Activated naive CD4-positive, alpha-beta T cell treated with anti-CD3 and anti-CD28 coated beads for 36 hours (primary cell): ENCODE measurements at regions of chr3 and their contacts with region 1.

Region 1: GRCh38 chr3:194671900-194672808 is at the start of gene LSG1:
- DNase-seq: peak; percentile 94
- H3K4me3 Mint-ChIP-seq: peak within 1 kb of the TSS; percentile 99
- H3K27ac Mint-ChIP-seq: peak within 1 kb of the TSS; percentile 97
- H3K4me1 Mint-ChIP-seq: peaks cover 55% of the 10 kb centered on the region
- H3K27me3 Mint-ChIP-seq: no peaks in the 10 kb centered on the region
- total RNA-seq, gene LSG1: 26.4 to 27.0 TPM

Region 2: DNA sequence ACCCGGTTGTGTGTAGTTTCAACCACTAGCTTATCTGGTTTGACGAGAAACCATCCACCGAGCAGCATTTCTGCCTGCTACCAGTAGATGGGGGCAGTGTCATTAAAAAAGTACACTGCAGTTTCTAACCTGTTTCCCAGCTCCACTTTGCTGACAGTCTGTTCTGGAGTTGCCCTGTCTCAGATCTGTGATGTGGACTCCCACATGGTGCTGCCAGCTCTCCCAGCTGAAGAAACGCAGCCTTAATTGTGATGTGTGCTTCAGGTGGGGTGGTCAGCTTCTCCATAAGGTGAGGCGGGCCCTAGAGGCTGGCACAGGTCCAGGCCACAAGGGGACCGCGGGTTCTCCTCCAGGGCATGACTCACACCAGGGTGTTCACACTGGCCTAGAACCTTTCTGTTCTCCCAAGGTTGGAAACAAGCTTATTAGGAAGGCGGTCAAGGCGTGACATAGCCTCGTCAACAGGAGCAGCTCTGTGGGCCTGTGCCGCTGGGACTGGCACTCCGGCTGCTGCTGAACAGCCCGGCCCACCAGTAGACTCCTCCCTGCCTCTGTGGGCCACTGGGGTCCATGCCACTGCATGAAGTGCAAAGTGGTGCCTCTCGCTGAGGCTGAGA is 10.6 kb after region 1 on chr3:
- CTCF ChIA-PET with region 1: interaction called, 110 read pairs
- intact Hi-C with region 1: loop called (anchors 1 kb)
- DNase-seq: peak; percentile 74
- H3K4me3 Mint-ChIP-seq: no peak overlapping the region
- H3K27ac Mint-ChIP-seq: no peak overlapping the region
- H3K4me1 Mint-ChIP-seq: peaks cover 29% of the 10 kb centered on the region
- H3K27me3 Mint-ChIP-seq: peaks cover 13% of the 10 kb centered on the region

Region 3: GRCh38 chr3:195106418-195106906 is 434.3 kb after region 1 on chr3:
- CTCF ChIA-PET with region 1: interaction called, 6 read pairs
- intact Hi-C with region 1: loop called (anchors 1 kb)
- DNase-seq: peak; percentile 63
- H3K4me3 Mint-ChIP-seq: peak overlapping the region; percentile 22
- H3K27ac Mint-ChIP-seq: no peak overlapping the region
- H3K4me1 Mint-ChIP-seq: no peaks in the 10 kb centered on the region
- H3K27me3 Mint-ChIP-seq: no peaks in the 10 kb centered on the region

Region 4: DNA sequence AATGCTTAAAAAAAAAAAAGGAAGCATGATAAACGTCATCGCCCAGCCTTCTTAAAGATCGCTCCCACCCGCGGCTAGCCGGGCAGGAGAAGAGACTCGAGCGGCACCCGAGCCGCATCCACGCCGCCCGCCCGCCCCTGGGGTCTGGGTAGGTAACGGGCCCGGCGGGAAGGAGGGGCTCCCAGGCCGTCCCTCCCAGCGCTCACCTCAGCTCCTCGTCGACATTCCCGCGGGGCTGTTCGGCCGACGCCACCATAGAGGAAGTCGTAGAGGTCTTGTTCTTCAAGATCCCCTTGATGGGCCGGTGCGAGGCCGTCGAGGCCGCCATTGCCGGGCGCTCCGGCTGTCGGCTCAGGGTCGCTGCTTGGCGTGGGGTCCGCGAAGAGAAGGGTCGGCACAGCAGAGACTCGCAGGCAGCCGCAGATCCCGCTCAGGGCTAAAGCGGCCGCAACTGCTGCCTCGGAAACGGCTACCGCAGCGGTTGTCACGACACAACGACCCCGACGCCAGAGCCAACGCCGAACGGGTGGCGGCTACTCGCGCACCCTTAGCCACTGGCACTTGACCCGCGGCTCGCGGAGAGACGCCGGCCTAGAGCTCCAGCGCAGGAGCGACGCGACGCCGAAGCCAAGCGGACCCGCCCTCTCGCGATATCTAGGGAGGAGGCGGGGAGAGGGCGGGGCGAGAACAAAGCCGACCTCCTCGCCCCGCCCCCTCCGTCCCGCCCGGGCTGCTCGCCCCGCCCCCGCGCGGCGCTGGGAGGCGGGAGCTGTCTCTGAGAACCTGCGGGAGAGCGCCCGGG is 870.7 kb after region 1 on chr3 and contains the start of gene PPP1R2:
- CTCF ChIA-PET with region 1: no interaction called
- intact Hi-C with region 1: loop called (anchors 5 kb)
- DNase-seq: peak; percentile 93
- H3K4me3 Mint-ChIP-seq: peak within 1 kb of the TSS; percentile 88
- H3K27ac Mint-ChIP-seq: peak within 1 kb of the TSS; percentile 94
- H3K4me1 Mint-ChIP-seq: peaks cover 53% of the 10 kb centered on the region
- H3K27me3 Mint-ChIP-seq: no peaks in the 10 kb centered on the region
- total RNA-seq, gene PPP1R2: 99.7 to 105 TPM